Testis (tissue), 5 donors: ENCODE measurements at regions of chr14 and their contacts with region 1.

Region 1: GRCh38 chr14:90399541-90400444 is 3.0 kb downstream of the CALM1 start:
- DNase-seq: peak; percentile 97
- H3K4me3 ChIP-seq: peak overlapping the region in 1 of 2 donors; percentile 100
- H3K27ac ChIP-seq: peak overlapping the region; percentile 59 to 91
- H3K4me1 ChIP-seq: peaks cover 10% of the 10 kb centered on the region
- H3K27me3 ChIP-seq: no peaks in the 10 kb centered on the region
- CTCF ChIP-seq: peak; percentile 94 to 98 (median 98)
- POLR2A ChIP-seq: no peak

Region 2: DNA sequence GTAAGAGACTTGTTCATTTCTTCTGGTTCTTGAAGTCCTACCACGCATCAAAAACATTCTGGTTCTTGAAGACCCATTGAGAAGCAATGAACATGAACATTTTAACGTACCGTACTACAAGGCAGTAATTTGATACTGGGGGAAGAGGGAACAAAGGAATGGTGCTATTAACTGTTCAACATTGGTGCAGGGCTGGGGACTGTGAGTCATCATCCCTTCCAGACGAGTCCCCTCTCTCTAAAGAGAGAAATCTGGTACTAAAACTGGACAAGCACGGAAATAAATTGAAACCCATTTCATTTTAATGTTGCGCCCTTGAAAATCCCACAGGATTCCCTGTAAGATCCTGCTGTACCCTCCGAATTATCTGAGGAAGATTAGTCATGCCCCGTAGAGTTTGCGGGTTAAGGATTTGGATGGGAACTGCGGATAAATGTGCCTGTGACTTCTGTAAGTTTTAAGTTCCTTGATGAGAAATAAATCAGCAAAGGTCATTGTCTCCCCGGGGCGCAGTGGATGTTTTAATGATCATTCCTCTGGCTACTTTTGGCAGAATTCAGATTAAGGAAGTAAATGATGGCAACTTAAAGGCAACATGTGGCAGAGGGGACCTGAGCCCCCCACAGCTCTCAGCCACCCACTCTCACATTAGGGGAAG is 259.4 kb before region 1 on chr14:
- intact Hi-C with region 1: no loop called
- DNase-seq: no peak
- H3K4me3 ChIP-seq: no peak overlapping the region
- H3K27ac ChIP-seq: no peak overlapping the region
- H3K4me1 ChIP-seq: no peaks in the 10 kb centered on the region
- H3K27me3 ChIP-seq: no peaks in the 10 kb centered on the region
- CTCF ChIP-seq: no peak
- POLR2A ChIP-seq: no peak

Region 3: DNA sequence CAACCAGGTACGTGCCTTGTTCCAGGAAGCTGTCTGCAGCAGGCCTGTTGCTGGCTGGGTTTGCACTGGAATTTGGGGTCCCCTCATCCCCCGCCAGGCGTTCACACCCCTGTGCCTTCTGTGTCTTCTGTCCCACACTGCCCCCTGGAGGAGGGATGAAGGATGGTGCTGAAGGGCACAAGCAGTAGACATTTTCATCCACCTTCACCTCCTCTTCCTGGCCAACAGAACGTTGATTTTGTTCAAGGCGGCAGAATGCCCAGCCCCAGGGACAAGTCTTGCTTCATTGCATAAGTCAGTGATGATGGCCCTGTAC is 119.1 kb after region 1 on chr14:
- intact Hi-C with region 1: no loop called
- DNase-seq: peak; percentile 56
- H3K4me3 ChIP-seq: no peak overlapping the region
- H3K27ac ChIP-seq: no peak overlapping the region
- H3K4me1 ChIP-seq: peaks cover 50% of the 10 kb centered on the region
- H3K27me3 ChIP-seq: no peaks in the 10 kb centered on the region
- CTCF ChIP-seq: peak; percentile 42 to 60 (median 50)
- POLR2A ChIP-seq: no peak

Region 4: GRCh38 chr14:90545966-90546751 is 146.4 kb after region 1 on chr14:
- intact Hi-C with region 1: no loop called
- DNase-seq: no peak
- H3K4me3 ChIP-seq: no peak overlapping the region
- H3K27ac ChIP-seq: peak overlapping the region in 1 of 2 donors; percentile 5
- H3K4me1 ChIP-seq: peaks cover 17% of the 10 kb centered on the region
- H3K27me3 ChIP-seq: no peaks in the 10 kb centered on the region
- CTCF ChIP-seq: no peak
- POLR2A ChIP-seq: no peak

Region 5: DNA sequence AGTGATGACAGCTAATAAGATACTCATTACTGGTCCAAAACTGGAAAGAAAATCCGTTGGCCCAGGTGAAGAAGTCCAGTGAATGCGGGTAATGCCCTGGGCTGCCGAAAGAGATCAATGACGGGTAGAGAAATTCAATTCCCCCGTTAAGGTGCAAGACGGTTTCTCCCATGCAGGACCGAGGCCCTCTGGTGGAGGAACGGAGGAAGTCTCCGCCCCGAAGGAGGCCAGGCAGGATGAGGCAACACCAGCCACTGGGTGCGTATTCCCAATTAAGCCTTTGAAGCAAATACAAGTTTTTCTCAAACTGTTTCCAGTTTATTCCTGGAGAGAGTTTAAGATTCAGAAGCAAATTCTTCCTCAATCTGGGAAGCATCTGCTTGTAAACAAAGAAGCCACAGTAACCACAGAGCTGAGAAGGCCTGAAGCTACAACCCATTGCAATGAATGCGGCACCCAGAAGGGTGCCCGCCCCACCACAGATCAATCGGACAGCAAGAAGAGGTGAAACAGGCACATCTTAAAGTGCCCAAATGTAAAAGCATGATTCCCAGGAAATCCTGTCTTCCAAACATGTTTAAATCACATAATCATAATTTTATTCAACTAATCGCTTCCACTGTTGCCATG is 297.9 kb after region 1 on chr14:
- intact Hi-C with region 1: loop called (anchors 5 kb)
- DNase-seq: peak; percentile 89
- H3K4me3 ChIP-seq: no peak overlapping the region
- H3K27ac ChIP-seq: peak overlapping the region; percentile 26 to 47
- H3K4me1 ChIP-seq: peaks cover 4% of the 10 kb centered on the region
- H3K27me3 ChIP-seq: no peaks in the 10 kb centered on the region
- CTCF ChIP-seq: peak; percentile 91 to 94 (median 93)
- POLR2A ChIP-seq: no peak

Region 6: DNA sequence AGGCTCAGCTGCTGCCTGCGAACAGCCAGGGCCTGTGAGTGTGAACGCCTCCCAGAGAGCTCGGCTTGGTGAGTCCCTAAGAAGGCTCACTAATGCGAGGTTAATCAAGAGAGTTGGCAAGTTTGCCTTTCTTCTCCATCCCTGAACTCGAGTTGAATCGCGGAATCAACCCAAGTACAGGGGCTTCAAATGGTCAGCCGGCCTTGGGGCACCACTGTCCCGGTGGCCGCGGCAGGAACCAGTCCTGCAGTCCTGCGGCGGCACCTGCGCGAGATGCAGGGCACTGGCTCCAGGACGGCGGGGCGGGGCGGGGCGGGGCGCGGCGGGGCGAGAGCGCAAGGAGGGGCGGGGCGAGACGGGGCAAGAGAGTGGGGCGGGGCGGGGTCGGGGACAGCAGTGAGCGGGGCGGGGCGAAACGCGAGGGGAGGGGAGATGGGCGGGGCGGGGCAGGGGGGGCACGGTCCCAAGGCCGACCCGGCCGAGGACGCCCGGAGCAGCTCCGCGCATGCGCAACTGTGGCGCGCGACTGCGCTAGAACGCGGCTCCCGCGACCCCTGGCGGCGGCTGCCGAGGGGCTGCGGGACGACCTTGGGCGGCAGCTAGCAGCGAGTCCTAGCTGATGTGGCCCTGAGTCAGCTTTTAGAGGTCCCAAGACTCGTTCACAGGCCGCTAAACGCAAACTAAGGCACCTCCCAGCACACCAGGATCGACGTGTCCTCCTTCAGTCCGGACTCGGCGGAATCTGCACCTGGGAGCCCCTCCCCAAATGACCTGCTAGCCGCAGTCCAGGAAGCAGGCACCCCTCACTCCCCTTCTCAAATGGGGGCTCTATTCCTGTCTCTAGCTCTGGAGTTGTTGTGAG is 358.5 kb after region 1 on chr14:
- intact Hi-C with region 1: loop called (anchors 5 kb)
- DNase-seq: peak; percentile 93
- H3K4me3 ChIP-seq: peak overlapping the region; percentile 45 to 58
- H3K27ac ChIP-seq: peak overlapping the region; percentile 79 to 92
- H3K4me1 ChIP-seq: peaks cover 9% of the 10 kb centered on the region
- H3K27me3 ChIP-seq: no peaks in the 10 kb centered on the region
- CTCF ChIP-seq: peak; percentile 84 to 95 (median 94)
- POLR2A ChIP-seq: no peak